ENCODE measurements at regions of chr11 and their contacts with region 1.

Region 1: DNA sequence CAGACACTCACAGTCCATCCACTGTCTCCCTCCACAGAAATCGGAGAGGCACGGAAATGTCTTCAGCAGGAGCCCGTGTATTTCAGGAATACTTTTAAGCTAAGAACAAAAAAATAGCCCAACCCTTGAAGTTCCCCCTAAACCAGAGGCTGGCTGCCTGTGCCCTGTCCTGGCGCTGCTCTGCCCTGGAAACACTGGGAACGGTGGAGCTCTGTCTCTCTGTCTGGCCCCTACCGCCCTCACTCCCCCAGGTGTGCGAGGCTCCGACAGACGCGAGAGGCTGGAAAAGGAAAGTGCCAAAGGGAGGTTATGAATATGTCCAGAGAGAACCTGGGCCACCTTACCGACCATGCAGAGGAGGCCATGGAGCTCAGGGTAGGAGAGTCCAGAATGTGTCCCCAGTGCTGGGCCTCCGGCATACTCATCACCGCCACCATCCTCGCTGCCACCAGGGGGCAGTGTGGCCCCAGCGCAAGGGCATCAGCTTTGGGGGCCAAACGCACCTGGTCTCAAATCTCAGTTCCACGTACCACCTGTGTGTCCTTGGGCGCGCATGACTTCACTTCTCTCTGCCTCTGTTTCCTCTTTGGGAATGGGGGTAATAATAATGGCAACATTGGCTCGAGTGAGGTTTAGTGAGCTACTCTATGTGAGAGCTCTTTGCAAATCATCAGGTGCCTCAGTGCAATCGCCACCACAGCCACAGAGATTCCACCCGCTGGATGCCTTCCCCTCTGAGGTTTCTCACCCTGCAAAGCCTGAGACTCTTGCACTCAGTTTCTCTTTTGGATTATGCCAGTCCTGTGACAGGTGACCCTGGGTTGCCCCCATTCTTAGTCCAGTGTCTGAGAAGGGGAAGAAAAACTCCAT is 10.4 kb upstream of the SLCO2B1 start:
- DNase-seq: peak; percentile 69
- H3K4me3 ChIP-seq: no peak overlapping the region
- H3K27ac ChIP-seq: no peak overlapping the region
- H3K4me1 ChIP-seq: peaks cover 21% of the 10 kb centered on the region
- H3K27me3 ChIP-seq: peaks cover 57% of the 10 kb centered on the region
- CTCF ChIP-seq: peak; percentile 95

Region 2: GRCh38 chr11:74932797-74933196 is 207.7 kb before region 1 on chr11:
- intact Hi-C with region 1: no loop called
- DNase-seq: no peak
- H3K4me3 ChIP-seq: no peak overlapping the region
- H3K27ac ChIP-seq: no peak overlapping the region
- H3K4me1 ChIP-seq: peaks cover 4% of the 10 kb centered on the region
- H3K27me3 ChIP-seq: no peaks in the 10 kb centered on the region
- CTCF ChIP-seq: no peak

Region 3: GRCh38 chr11:74966651-74967050 is 173.9 kb before region 1 on chr11:
- intact Hi-C with region 1: no loop called
- DNase-seq: no peak
- H3K4me3 ChIP-seq: no peak overlapping the region
- H3K27ac ChIP-seq: no peak overlapping the region
- H3K4me1 ChIP-seq: peaks cover 46% of the 10 kb centered on the region
- H3K27me3 ChIP-seq: no peaks in the 10 kb centered on the region
- CTCF ChIP-seq: no peak

Region 4: GRCh38 chr11:75063732-75064314 is 76.7 kb before region 1 on chr11:
- intact Hi-C with region 1: no loop called
- DNase-seq: no peak
- H3K4me3 ChIP-seq: no peak overlapping the region
- H3K27ac ChIP-seq: no peak overlapping the region
- H3K4me1 ChIP-seq: no peaks in the 10 kb centered on the region
- H3K27me3 ChIP-seq: peaks cover 31% of the 10 kb centered on the region
- CTCF ChIP-seq: no peak

Region 5: GRCh38 chr11:75204685-75205563 is 64.4 kb after region 1 on chr11:
- intact Hi-C with region 1: loop called (anchors 2 kb)
- DNase-seq: peak; percentile 88
- H3K4me3 ChIP-seq: no peak overlapping the region
- H3K27ac ChIP-seq: peak overlapping the region; percentile 3
- H3K4me1 ChIP-seq: peaks cover 10% of the 10 kb centered on the region
- H3K27me3 ChIP-seq: peaks cover 33% of the 10 kb centered on the region
- CTCF ChIP-seq: peak; percentile 95

Region 6: GRCh38 chr11:75248690-75249268 is 108.3 kb after region 1 on chr11:
- intact Hi-C with region 1: loop called (anchors 2 kb)
- DNase-seq: peak; percentile 87
- H3K4me3 ChIP-seq: no peak overlapping the region
- H3K27ac ChIP-seq: no peak overlapping the region
- H3K4me1 ChIP-seq: no peaks in the 10 kb centered on the region
- H3K27me3 ChIP-seq: peaks cover 58% of the 10 kb centered on the region
- CTCF ChIP-seq: peak; percentile 100